Right lobe of liver (tissue), 6 donors: ENCODE measurements at regions of chr22 and their contacts with region 1.

Region 1: DNA sequence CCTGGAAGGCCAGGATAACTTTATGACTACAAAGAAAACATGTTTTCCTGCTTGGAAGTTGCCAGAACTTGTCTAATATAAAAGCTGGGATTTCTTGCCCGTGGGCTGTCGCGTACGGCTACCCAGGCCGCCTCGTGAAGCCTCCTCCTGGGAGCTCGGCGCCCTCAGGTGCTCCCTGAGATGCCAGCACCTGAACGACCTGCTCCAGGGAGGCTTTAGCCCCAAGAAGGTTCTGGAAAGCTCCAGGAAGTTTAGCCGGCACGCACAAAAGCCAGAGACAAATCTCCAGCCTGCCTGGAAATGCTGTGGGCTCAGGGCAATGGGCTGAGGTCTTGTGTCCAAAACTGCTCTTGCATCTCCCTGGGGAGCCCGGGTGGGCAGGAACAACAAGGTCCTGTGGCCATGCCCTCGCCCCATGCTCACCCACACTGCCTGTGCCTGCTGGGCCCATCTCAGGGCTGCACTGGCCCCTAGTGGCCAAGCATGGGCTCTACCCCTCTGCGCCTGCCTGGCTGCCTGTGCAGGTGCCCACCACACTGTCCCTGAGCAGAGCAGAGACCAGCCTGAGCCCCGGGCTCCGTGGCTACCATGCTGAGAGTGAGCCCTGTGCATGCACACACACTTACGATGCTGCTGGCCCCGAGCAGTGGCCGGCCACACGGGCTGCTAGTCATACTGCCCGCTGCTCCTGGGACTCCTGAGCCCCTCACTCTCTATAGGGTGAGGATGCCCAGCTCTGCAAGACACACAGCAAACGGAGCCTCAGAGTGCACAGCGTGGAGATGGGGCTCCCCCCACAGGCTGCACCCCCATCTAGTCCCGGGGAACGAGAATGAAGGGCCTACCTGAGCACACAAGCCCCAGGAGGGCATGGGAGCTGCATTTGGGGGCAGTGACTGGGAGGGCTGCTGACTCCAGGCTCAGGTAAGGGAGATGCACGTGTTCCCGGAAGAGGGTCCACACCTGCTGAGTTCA is 4.9 kb upstream of the CELSR1 start:
- DNase-seq: peak; percentile 78 to 84 (median 78)
- ATAC-seq: peak; percentile 88 to 96 (median 96)
- H3K4me3 ChIP-seq: no peak overlapping the region
- H3K27ac ChIP-seq: no peak overlapping the region
- H3K4me1 ChIP-seq: peaks cover 0 to 18% (median 5%) of the 10 kb centered on the region in 4 donors
- H3K27me3 ChIP-seq: peaks cover 0 to 4% of the 10 kb centered on the region in 2 donors
- CTCF ChIP-seq: peak; percentile 90 to 98 (median 95)
- POLR2A ChIP-seq: no peak

Region 2: DNA sequence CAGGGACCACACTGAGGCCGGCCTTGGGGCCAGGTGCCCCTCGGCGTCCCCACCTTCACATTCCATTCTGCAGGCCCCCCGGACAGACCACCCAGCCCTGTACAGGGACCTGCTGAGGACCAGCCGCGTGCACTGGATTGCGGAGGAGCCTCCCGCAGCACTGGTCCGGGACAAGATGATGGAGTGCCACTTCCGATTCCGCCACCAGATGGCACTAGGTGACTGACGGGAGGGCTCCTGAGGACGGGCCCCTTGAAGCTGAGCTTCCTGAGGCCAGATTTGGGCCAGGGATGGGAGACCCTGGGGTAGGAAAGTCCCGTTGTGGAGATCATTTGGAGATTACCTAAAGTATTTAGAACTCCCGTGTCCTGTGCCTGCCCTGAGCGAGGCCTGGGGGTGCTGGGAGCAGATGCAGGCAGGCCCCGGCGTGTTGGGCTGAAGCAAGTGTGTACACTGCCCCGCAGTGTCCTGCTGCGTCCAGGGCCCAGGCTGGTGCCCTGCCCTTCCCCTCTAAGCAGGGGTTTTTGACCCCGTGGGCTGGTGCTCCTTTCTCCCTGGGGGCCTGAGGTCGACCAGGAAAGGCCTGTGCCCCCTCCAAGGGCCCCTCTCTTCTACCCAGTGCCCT is 186.8 kb before region 1 on chr22:
- intact Hi-C with region 1: loop called (anchors 5 kb)
- DNase-seq: peak; percentile 65 to 75 (median 75)
- ATAC-seq: peak; percentile 58 to 78 (median 71)
- H3K4me3 ChIP-seq: no peak overlapping the region
- H3K27ac ChIP-seq: no peak overlapping the region
- H3K4me1 ChIP-seq: no peaks in the 10 kb centered on the region
- H3K27me3 ChIP-seq: no peaks in the 10 kb centered on the region
- CTCF ChIP-seq: peak; percentile 69 to 83 (median 77)
- POLR2A ChIP-seq: no peak

Region 3: GRCh38 chr22:46381199-46381598 is 161.1 kb before region 1 on chr22:
- intact Hi-C with region 1: loop called in 1 of 2 experiments (anchors 10 kb)
- DNase-seq: peak in 1 of 3 donors; percentile 37
- ATAC-seq: no peak
- H3K4me3 ChIP-seq: no peak overlapping the region
- H3K27ac ChIP-seq: no peak overlapping the region
- H3K4me1 ChIP-seq: peaks cover 0 to 40% (median 12%) of the 10 kb centered on the region in 4 donors
- H3K27me3 ChIP-seq: no peaks in the 10 kb centered on the region
- CTCF ChIP-seq: no peak
- POLR2A ChIP-seq: no peak

Region 4: GRCh38 chr22:46714550-46714949 is 172.3 kb after region 1 on chr22:
- intact Hi-C with region 1: no loop called
- DNase-seq: no peak
- ATAC-seq: peak in 1 of 4 donors; percentile 41
- H3K4me3 ChIP-seq: no peak overlapping the region
- H3K27ac ChIP-seq: no peak overlapping the region
- H3K4me1 ChIP-seq: no peaks in the 10 kb centered on the region
- H3K27me3 ChIP-seq: no peaks in the 10 kb centered on the region
- CTCF ChIP-seq: no peak
- POLR2A ChIP-seq: no peak